Aorta (tissue), 5 donors: ENCODE measurements at regions of chr10 and their contacts with region 1.

Region 1: DNA sequence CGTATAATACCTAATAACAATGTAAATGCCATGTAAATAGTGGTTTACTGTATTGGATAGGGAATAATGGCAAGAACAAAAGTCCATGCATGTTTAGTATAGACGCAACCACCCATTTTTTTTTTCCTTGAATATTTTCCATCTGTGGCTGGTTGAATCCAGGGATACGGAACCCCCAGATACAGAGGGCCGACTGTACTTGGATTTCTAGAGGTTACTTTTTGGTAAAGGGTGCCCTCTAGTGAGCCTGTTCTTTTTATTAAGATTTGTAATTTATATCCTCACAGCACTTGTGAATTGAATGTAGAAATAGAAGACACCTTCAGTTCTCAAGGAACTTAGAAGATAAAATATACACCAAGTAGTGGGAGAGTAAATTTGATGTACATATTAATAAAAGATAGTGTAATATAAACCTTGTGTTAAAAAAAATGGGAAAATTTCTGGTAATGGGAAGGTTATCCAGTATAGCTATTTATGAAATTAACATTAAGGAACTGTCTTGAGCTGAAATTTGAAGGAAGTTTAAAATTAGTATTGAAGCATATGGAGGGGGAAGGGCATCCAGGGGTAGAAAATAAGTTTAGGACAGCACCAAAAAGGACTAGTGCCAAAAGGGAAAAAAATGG is 32.0 kb downstream of the EXOC6 start:
- DNase-seq: no peak
- ATAC-seq: no peak
- H3K4me3 ChIP-seq: no peak overlapping the region
- H3K27ac ChIP-seq: no peak overlapping the region
- H3K4me1 ChIP-seq: no peaks in the 10 kb centered on the region
- H3K27me3 ChIP-seq: no peaks in the 10 kb centered on the region

Region 2: DNA sequence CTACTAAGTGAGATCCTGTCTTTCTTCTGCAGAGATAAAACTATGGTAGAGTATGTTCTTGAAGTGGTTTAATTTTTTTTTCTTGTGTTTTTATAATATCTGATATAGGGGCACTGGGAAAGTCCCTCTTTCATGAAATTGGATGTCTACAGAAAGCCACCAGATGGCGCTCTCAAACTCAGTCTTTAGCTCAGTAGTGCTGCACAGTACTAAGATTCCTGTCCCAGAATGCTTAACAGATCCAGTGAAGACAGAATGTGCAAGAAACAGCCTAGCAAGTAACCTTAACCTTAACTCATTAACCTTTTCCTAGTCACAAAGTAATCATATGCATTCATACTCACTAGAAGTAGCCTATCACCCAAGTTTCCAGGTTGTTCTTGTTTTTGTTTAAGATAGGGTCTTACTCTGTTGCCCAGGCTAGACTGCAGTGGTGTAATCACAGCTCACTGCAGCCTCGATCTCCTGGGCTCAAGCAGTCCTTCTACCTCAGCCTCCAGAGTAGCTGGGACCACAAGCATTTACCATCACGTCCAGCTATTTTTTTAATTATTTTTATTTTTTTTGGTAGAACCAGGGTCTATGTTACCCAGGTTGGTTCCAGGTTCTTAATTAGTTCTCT is 363.2 kb before region 1 on chr10:
- intact Hi-C with region 1: loop called (anchors 5 kb)
- DNase-seq: no peak
- ATAC-seq: peak; percentile 85
- H3K4me3 ChIP-seq: no peak overlapping the region
- H3K27ac ChIP-seq: no peak overlapping the region
- H3K4me1 ChIP-seq: no peaks in the 10 kb centered on the region
- H3K27me3 ChIP-seq: no peaks in the 10 kb centered on the region

Region 3: GRCh38 chr10:92773776-92774175 is 106.6 kb before region 1 on chr10:
- intact Hi-C with region 1: no loop called
- DNase-seq: no peak
- ATAC-seq: no peak
- H3K4me3 ChIP-seq: no peak overlapping the region
- H3K27ac ChIP-seq: no peak overlapping the region
- H3K4me1 ChIP-seq: no peaks in the 10 kb centered on the region
- H3K27me3 ChIP-seq: no peaks in the 10 kb centered on the region

Region 4: DNA sequence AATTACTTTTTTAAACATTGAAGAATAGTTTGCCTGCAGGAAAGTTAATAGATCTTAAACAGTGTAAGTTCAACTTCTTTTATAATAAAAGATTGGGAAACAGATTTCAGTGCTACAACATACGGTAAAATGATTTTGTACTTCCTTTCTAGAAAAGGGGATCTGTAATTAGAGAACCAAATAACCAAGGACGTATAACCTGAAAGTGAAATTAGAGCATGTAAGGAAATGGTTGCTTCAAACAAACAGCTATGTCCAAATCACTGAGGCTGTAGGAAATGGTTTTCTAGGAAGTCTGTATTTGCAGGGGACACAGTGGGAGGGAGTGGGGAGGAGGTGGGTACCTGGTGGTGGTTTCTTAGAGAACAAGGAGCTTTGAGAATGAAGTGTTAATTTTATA is 89.9 kb before region 1 on chr10:
- intact Hi-C with region 1: no loop called
- DNase-seq: no peak
- ATAC-seq: no peak
- H3K4me3 ChIP-seq: no peak overlapping the region
- H3K27ac ChIP-seq: no peak overlapping the region
- H3K4me1 ChIP-seq: no peaks in the 10 kb centered on the region
- H3K27me3 ChIP-seq: no peaks in the 10 kb centered on the region

Region 5: DNA sequence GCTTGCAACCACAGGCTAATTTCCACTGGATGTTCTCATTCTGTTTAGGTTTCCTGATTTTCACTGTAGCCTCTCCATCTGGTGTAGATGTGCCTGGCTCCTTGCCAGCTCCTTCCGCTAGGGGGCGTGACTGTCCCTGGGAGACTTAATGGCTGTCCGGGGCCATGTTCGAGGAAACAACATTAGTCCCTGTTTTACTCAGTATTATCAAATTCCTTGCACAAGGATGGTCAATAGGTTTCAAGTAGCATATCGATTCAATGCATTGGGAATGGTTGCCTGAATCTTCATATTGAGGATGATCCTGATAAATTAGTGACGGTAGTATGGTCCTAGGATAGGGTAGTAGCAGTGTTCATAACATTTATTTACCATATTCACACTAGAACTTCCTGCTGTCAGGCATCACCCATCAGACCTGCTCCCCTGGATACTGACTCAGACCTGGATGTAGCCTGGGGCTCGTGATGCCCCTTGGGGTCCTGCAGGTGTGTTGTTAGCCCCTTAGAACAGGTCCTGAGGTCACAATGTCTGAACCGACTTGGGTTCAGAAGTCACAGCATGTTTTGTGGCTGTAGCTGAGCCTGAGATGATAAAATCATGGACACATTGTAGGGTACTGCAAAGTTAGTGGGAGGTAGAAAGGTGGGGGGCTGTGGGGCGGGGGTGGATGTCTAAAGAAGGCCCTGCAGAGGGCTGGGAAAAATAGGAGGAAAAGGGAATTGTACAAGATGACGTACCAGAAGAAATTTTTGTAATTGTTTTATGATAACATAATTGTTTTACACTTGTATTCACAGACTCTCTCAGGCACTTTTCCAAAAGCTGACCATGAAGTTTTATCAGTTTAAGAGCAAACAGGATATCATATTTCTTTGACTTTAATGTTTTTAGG is 40.9 kb before region 1 on chr10:
- intact Hi-C with region 1: loop called (anchors 5 kb)
- DNase-seq: peak; percentile 76 to 85
- ATAC-seq: peak; percentile 11
- H3K4me3 ChIP-seq: no peak overlapping the region
- H3K27ac ChIP-seq: no peak overlapping the region
- H3K4me1 ChIP-seq: no peaks in the 10 kb centered on the region
- H3K27me3 ChIP-seq: no peaks in the 10 kb centered on the region

Region 6: DNA sequence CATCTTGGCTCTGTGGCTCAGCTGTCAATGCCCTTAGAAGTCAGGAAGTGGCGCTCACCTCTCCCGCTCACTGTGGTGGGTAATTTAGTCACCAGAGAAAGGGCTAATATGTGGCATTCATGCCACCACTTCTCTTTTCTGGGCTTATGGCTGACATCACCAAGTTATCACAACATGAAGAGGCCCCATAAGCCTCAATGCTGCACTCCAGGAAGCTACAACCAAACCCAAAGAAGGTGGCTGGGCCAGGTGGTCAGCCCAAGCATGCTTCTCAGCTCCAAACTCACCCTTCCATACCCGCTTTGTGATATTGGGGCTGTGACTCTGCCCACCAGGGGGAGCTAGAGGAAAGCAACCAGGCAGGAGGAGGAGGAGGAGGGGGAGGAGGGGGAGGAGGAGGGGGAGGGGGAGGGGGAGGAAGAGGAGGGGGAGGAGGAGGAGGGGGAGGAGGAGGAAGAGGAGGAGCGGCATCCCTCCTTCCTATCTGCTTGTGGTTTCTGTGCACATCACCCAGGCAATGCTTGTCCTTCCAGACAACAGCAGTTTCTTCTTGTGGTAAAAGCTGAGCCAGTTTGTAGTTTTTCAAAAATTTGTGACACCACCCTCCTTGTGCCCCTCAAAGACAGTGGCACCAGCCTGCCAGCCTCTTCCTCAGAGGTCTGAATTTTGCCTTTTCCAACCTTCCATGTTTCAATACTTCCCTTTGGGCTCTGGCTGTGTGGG is 235.5 kb after region 1 on chr10:
- intact Hi-C with region 1: no loop called
- DNase-seq: peak; percentile 82 to 86
- ATAC-seq: peak; percentile 80
- H3K4me3 ChIP-seq: no peak overlapping the region
- H3K27ac ChIP-seq: no peak overlapping the region
- H3K4me1 ChIP-seq: no peaks in the 10 kb centered on the region
- H3K27me3 ChIP-seq: no peaks in the 10 kb centered on the region